Activated T-helper 1 cell treated with anti-CD3 and anti-CD28 coated beads, Interleukin-12 subunit alpha, Interleukin-12 subunit beta, Interleukin-2, Interleukin-4 antibody, amounts not matched to agents 30 ng/mL and 10 ng/mL and 1 ng/mL, durations not matched to agents 14 hours and 24 hours and 36 hours (primary cell): ENCODE measurements at regions of chr5 and their contacts with region 1.

Region 1: GRCh38 chr5:39376293-39376714 is 12.0 kb upstream of the C9 start:
- DNase-seq: peak; percentile 17
- H3K4me3 Mint-ChIP-seq: no peak overlapping the region
- H3K27ac Mint-ChIP-seq: no peak overlapping the region
- H3K4me1 Mint-ChIP-seq: no peaks in the 10 kb centered on the region
- H3K27me3 Mint-ChIP-seq: peaks cover 9% of the 10 kb centered on the region

Region 2: GRCh38 chr5:39547553-39548154 is 171.3 kb after region 1 on chr5:
- intact Hi-C with region 1: loop called (anchors 1 kb)
- DNase-seq: no peak
- H3K4me3 Mint-ChIP-seq: no peak overlapping the region
- H3K27ac Mint-ChIP-seq: no peak overlapping the region
- H3K4me1 Mint-ChIP-seq: peaks cover 7% of the 10 kb centered on the region
- H3K27me3 Mint-ChIP-seq: peaks cover 6% of the 10 kb centered on the region

Region 3: GRCh38 chr5:39570403-39571027 is 194.2 kb after region 1 on chr5:
- intact Hi-C with region 1: loop called (anchors 1 kb)
- DNase-seq: no peak
- H3K4me3 Mint-ChIP-seq: no peak overlapping the region
- H3K27ac Mint-ChIP-seq: no peak overlapping the region
- H3K4me1 Mint-ChIP-seq: no peaks in the 10 kb centered on the region
- H3K27me3 Mint-ChIP-seq: peaks cover 6% of the 10 kb centered on the region